Dorsolateral prefrontal cortex (tissue), 120 donors: ENCODE measurements at regions of chr4 and their contacts with region 1.

Region 1: GRCh38 chr4:151409470-151410313 is 716 bp downstream of the FHIP1A start:
- DNase-seq: peak in 1 of 10 donors; percentile 33
- H3K4me3 ChIP-seq: peak overlapping the region; percentile 7 to 74 (median 59)
- H3K27ac ChIP-seq: no peak overlapping the region
- H3K27me3 ChIP-seq: peaks cover 0 to 3% (median 0%) of the 10 kb centered on the region in 45 donors
- CTCF ChIP-seq: no peak

Region 2: DNA sequence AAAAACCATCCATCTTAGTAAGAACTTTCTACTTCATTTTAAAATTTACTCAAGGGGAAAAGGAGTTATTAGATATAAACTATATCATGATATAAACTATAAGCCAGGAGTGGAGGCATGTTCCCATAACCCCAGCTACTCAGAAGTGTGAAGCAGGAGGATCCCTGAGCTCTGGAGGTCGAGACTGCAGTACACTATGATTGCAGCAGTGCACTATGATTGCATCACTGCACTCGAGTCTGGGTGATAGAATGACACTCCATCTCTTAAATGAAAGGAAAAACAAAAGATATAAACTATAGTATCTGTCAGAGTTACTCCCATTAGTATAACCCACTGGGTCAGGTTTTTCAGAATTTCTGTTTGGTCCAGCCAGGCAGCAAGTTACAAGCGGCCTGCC is 262.7 kb before region 1 on chr4:
- intact Hi-C with region 1: no loop called
- DNase-seq: no peak
- H3K4me3 ChIP-seq: no peak overlapping the region
- H3K27ac ChIP-seq: peak overlapping the region in 1 of 59 donors; percentile 11
- H3K27me3 ChIP-seq: no peaks in the 10 kb centered on the region
- CTCF ChIP-seq: no peak

Region 3: GRCh38 chr4:151356510-151356909 is 53.2 kb before region 1 on chr4:
- intact Hi-C with region 1: no loop called
- DNase-seq: no peak
- H3K4me3 ChIP-seq: no peak overlapping the region
- H3K27ac ChIP-seq: no peak overlapping the region
- H3K27me3 ChIP-seq: no peaks in the 10 kb centered on the region
- CTCF ChIP-seq: no peak

Region 4: GRCh38 chr4:151766700-151767099 is 357.0 kb after region 1 on chr4:
- intact Hi-C with region 1: loop called in 1 of 2 experiments (anchors 5 kb)
- DNase-seq: no peak
- H3K4me3 ChIP-seq: no peak overlapping the region
- H3K27ac ChIP-seq: peak overlapping the region in 3 of 59 donors; percentile 29 to 59 (median 38)
- H3K27me3 ChIP-seq: peaks cover 0 to 10% (median 0%) of the 10 kb centered on the region in 45 donors
- CTCF ChIP-seq: no peak